MCF 10A (cell line): ENCODE measurements at regions of chrX and their contacts with region 1.

Region 1: DNA sequence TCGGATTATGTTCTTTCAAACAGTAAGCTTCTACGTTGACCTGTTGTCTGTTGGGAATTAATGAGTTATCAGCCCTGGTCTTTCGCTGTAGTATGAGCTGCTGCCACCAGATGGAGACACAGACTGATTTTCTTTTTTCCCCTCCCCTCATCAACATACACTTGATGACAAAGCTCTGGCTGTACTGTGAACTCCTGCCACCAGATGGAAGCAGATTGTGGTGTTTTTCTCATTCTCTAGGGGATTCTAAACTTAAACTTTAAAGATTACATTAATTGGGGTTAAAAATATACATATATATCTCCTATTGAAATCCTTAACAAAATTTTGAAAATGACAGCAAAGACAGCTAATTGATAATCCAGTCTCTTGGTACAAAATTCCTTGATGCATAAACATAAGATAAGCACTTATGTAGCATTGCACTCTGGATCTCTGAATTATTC is 44.8 kb downstream of the SMS start:
- DNase-seq: peak; percentile 85
- H3K4me3 Mint-ChIP-seq: no peak overlapping the region
- H3K27ac Mint-ChIP-seq: no peak overlapping the region
- H3K4me1 Mint-ChIP-seq: no peaks in the 10 kb centered on the region
- H3K27me3 Mint-ChIP-seq: peaks cover 62% of the 10 kb centered on the region
- CTCF ChIP-seq: peak; percentile 92

Region 2: DNA sequence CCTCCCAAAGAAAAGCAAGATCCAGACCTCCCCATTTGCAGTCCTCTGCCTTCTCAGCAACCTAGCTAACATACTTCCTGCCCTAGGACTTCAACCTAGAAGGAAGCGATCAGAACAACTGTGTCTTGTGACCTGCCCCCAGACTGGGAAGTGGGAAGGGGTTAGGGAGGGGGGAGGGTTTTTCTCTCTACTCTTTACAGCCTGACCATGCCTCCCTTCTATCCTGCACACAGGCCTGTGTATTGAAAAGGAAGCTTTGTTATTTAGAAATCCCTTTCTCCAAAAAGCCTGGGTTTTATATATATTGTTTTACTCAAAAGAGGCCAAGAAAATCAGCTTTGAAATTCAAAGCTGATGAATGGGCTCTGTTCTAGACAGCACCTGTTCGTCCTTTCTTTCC is 80.1 kb before region 1 on chrX:
- CTCF ChIA-PET with region 1: no interaction called
- POLR2A ChIA-PET with region 1: no interaction called
- intact Hi-C with region 1: no loop called
- DNase-seq: no peak
- H3K4me3 Mint-ChIP-seq: no peak overlapping the region
- H3K27ac Mint-ChIP-seq: no peak overlapping the region
- H3K4me1 Mint-ChIP-seq: no peaks in the 10 kb centered on the region
- H3K27me3 Mint-ChIP-seq: peaks cover 58% of the 10 kb centered on the region
- CTCF ChIP-seq: no peak

Region 3: DNA sequence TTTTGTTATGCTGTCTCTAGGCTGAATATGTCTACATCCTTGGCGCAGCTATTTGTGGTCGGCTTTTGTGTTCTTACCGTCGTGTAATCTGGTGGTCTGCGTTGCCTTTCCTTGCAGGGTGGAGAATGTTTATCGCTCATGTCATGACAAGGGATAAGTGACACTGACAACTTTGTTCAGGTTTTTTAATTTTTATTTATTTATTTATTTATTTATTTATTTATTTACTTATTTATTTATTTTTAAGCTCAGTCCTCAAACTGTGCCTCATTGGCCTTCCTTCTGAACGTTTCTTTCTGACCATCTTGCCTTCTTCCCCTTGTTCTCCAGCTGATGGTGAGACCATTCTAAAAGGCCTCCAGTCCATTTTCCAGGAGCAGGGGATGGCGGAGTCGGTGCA is 18.5 kb before region 1 on chrX:
- CTCF ChIA-PET with region 1: interaction called, 30 read pairs
- POLR2A ChIA-PET with region 1: no interaction called
- intact Hi-C with region 1: no loop called
- DNase-seq: no peak
- H3K4me3 Mint-ChIP-seq: no peak overlapping the region
- H3K27ac Mint-ChIP-seq: no peak overlapping the region
- H3K4me1 Mint-ChIP-seq: no peaks in the 10 kb centered on the region
- H3K27me3 Mint-ChIP-seq: peaks cover 58% of the 10 kb centered on the region
- CTCF ChIP-seq: no peak

Region 4: DNA sequence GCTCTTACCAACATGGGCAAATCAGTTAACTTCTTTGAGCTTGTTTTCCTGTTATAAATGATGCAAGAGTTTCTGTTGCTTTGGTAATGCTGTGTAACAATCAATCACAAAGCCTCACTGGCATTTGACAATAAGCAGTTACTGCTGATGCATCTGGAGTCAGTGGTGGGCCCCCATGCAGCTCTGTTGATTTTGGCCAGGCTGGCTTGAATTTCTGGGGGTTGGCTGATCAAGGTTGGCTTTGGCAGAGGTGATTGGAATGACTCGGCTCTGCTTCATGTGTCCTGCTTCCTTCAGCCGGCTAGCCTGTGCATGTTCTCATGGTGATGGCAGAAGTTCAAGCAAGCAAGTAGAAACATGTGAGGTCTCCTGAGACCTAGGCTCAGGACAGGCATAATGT is 137.2 kb after region 1 on chrX:
- CTCF ChIA-PET with region 1: interaction called, 15 read pairs
- POLR2A ChIA-PET with region 1: interaction called, 3 read pairs
- intact Hi-C with region 1: no loop called
- DNase-seq: peak; percentile 97
- H3K4me3 Mint-ChIP-seq: no peak overlapping the region
- H3K27ac Mint-ChIP-seq: peak overlapping the region; percentile 60
- H3K4me1 Mint-ChIP-seq: peaks cover 18% of the 10 kb centered on the region
- H3K27me3 Mint-ChIP-seq: no peaks in the 10 kb centered on the region
- CTCF ChIP-seq: no peak

Region 5: DNA sequence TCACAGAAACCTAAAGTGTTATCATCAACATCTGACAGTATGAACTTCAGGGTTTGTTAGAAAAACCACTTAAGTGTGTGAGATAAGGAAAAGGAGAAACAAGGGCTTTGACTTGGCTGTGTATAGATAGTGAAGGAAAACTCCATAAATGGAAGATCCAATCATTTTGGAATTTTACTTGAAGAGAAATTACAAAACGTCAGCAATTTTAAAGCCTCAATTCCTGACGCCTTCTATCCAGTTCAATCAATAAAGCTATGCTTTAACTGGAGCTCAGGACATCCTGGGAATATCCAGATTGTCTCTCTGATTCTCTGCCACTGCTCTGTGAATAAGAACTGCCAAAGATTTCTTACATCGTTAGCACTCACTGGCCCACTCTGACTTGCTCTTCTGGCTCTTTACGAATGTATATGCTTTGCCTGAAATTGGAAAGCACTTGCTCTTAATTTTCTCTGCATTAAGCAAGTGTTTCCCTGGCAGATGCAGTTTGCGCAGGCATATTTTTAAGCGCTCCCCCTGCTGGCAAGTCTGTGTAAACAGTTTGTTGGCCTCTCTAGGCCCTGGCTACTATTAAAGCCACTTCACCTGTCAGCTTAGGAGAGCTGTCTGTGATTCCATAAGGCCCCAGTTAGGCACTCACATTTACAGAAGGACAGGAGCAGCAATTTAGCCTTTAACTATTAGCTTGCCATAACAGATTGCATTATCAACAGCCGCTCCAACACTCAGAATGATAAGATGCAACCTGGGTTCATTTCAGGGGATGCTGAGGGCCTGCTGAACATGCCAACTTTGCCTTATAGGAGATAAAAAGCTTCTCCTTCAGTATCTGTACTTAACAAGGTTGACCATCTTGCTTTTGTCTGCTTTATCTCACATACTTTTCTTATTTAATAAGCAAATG is 763.0 kb after region 1 on chrX:
- CTCF ChIA-PET with region 1: interaction called, 48 read pairs
- POLR2A ChIA-PET with region 1: interaction called, 3 read pairs
- intact Hi-C with region 1: loop called (anchors 2 kb)
- DNase-seq: peak; percentile 68
- H3K4me3 Mint-ChIP-seq: no peak overlapping the region
- H3K27ac Mint-ChIP-seq: no peak overlapping the region
- H3K4me1 Mint-ChIP-seq: no peaks in the 10 kb centered on the region
- H3K27me3 Mint-ChIP-seq: peaks cover 79% of the 10 kb centered on the region
- CTCF ChIP-seq: peak; percentile 74

Region 6: GRCh38 chrX:23554304-23554703 is 1568.9 kb after region 1 on chrX:
- CTCF ChIA-PET with region 1: interaction called, 20 read pairs
- POLR2A ChIA-PET with region 1: no interaction called
- intact Hi-C with region 1: loop called (anchors 1 kb)
- DNase-seq: peak; percentile 52
- H3K4me3 Mint-ChIP-seq: no peak overlapping the region
- H3K27ac Mint-ChIP-seq: no peak overlapping the region
- H3K4me1 Mint-ChIP-seq: no peaks in the 10 kb centered on the region
- H3K27me3 Mint-ChIP-seq: peaks cover 61% of the 10 kb centered on the region
- CTCF ChIP-seq: peak; percentile 63

Region 7: GRCh38 chrX:23667239-23668177 is 1682.2 kb after region 1 on chrX and contains the start of gene PRDX4:
- CTCF ChIA-PET with region 1: no interaction called
- POLR2A ChIA-PET with region 1: no interaction called
- intact Hi-C with region 1: loop called (anchors 1 kb)
- DNase-seq: peak; percentile 83
- H3K4me3 Mint-ChIP-seq: peak within 1 kb of the TSS; percentile 79
- H3K27ac Mint-ChIP-seq: peak within 1 kb of the TSS; percentile 43
- H3K4me1 Mint-ChIP-seq: peaks cover 4% of the 10 kb centered on the region
- H3K27me3 Mint-ChIP-seq: peaks cover 46% of the 10 kb centered on the region
- CTCF ChIP-seq: no peak
- total RNA-seq, gene PRDX4: 134 and 157 TPM in 2 replicates